Transverse colon (tissue), 4 donors: ENCODE measurements at regions of chr2 and their contacts with region 1.

Region 1: DNA sequence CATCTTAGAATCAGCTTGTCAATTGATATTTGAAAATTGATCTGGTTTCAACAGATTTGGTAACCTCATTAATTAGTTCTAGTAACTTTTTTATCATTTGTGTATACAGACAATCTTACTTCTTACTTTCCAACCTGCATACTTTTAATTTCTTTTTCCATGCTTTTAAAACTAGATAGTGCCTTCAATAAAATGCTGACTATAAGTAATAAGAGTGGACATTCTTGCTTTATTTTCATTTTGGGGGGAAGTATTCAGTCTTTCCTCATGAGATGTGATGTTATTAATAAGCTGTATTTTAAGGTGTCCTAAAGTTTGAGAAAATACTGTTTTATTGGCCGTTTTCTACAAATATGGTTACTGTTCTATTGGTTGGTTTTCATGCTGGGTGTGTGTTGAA is 109.1 kb downstream of the KCNH7 start:
- DNase-seq: no peak
- H3K4me3 ChIP-seq: no peak overlapping the region
- H3K27ac ChIP-seq: no peak overlapping the region
- H3K4me1 ChIP-seq: peaks cover 0 to 10% (median 5%) of the 10 kb centered on the region in 4 donors
- H3K27me3 ChIP-seq: no peaks in the 10 kb centered on the region
- CTCF ChIP-seq: no peak
- EP300 ChIP-seq: no peak
- POLR2A ChIP-seq: no peak

Region 2: GRCh38 chr2:163191372-163191771 is 461.9 kb after region 1 on chr2:
- in situ Hi-C with region 1: no loop called
- intact Hi-C with region 1: no loop called
- DNase-seq: no peak
- H3K4me3 ChIP-seq: no peak overlapping the region
- H3K27ac ChIP-seq: no peak overlapping the region
- H3K4me1 ChIP-seq: no peaks in the 10 kb centered on the region
- H3K27me3 ChIP-seq: no peaks in the 10 kb centered on the region
- CTCF ChIP-seq: peak in 4 of 5 experiments; percentile 23 to 40 (median 32)
- EP300 ChIP-seq: no peak
- POLR2A ChIP-seq: no peak

Region 3: DNA sequence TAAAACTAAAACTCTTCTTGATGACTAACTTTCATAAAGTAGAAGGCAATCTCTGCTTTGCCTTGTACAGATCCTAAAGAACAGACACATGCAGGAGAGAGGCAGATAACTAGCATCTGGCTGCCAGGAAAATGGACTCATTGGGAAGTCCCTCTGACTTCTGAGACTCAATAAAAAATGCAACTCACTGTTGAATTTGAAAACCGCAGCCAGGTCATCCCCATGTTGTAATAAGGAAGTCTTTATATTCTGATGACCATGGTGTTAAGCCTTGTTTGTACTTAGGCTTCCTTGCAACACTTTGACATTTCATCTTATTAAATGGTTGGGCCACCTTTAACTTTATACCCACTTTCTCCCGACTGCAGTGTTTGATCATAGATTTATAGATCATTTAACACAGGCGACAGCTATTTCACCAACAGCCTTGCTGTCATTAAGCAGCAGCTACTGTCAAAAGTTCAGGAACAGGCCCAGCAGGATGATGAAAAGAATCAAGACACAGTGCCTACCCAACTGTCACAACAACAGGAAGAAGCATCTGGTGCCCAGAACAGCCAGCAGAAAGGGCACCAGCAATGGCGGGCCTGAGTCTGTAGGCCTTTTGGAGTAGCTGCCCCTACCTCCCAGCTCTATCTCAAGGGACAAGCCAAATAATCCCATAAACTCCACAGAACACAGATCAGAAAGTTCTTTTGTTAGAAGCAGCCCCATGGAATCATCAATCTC is 484.4 kb after region 1 on chr2:
- in situ Hi-C with region 1: no loop called
- intact Hi-C with region 1: loop called (anchors 5 kb)
- DNase-seq: no peak
- H3K4me3 ChIP-seq: no peak overlapping the region
- H3K27ac ChIP-seq: no peak overlapping the region
- H3K4me1 ChIP-seq: no peaks in the 10 kb centered on the region
- H3K27me3 ChIP-seq: no peaks in the 10 kb centered on the region
- CTCF ChIP-seq: no peak
- EP300 ChIP-seq: no peak
- POLR2A ChIP-seq: no peak